ENCODE measurements at regions of chr2 and their contacts with region 1.

Region 1: GRCh38 chr2:157302492-157303099 is 23.0 kb downstream of the ERMN start:
- DNase-seq: no peak
- H3K4me3 ChIP-seq: no peak overlapping the region
- H3K27ac ChIP-seq: no peak overlapping the region
- H3K4me1 ChIP-seq: peaks cover 0 to 2% (median 0%) of the 10 kb centered on the region in 4 experiments; a peak in 1 of 7 replicates
- H3K27me3 ChIP-seq: no peaks in the 10 kb centered on the region
- CTCF ChIP-seq: peak in 2 of 3 experiments; percentile 53 to 72; a peak in 3 of 4 replicates
- EP300 ChIP-seq: no peak
- POLR2A ChIP-seq: no peak
- RAD21 ChIP-seq: peak; percentile 86 to 90

Region 2: GRCh38 chr2:157287160-157287559 is 15.4 kb before region 1 on chr2:
- CTCF ChIA-PET with region 1: interaction called, 20 read pairs
- POLR2A ChIA-PET with region 1: no interaction called
- DNase-seq: no peak
- H3K4me3 ChIP-seq: no peak overlapping the region
- H3K27ac ChIP-seq: no peak overlapping the region
- H3K4me1 ChIP-seq: no peaks in the 10 kb centered on the region
- H3K27me3 ChIP-seq: no peaks in the 10 kb centered on the region
- CTCF ChIP-seq: no peak
- EP300 ChIP-seq: no peak
- POLR2A ChIP-seq: no peak
- RAD21 ChIP-seq: no peak

Region 3: DNA sequence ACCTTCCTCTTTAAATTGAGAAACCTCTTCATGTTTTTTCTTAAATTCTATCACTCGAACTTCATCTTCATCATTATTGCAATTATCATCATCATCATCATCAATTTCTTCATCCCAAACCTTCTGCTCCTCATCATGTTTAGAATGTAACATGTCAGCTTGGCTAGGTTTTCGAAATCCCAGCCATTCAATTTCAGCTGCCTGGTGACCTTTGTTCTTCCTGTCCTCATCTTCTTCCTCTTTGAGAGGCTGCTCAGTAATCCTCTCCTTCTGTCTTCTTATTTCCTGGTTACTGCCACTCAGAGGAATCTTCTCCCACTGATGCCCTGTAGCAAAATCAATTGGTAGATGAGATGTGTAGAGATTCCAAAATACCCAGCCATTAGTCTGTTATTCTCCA is 18.9 kb after region 1 on chr2:
- CTCF ChIA-PET with region 1: interaction called, 299 read pairs
- POLR2A ChIA-PET with region 1: no interaction called
- DNase-seq: no peak
- H3K4me3 ChIP-seq: no peak overlapping the region
- H3K27ac ChIP-seq: no peak overlapping the region
- H3K4me1 ChIP-seq: peaks cover 0 to 8% (median 5%) of the 10 kb centered on the region in 4 experiments; a peak in 6 of 7 replicates
- H3K27me3 ChIP-seq: no peaks in the 10 kb centered on the region
- CTCF ChIP-seq: no peak
- EP300 ChIP-seq: no peak
- POLR2A ChIP-seq: no peak
- RAD21 ChIP-seq: no peak

Region 4: DNA sequence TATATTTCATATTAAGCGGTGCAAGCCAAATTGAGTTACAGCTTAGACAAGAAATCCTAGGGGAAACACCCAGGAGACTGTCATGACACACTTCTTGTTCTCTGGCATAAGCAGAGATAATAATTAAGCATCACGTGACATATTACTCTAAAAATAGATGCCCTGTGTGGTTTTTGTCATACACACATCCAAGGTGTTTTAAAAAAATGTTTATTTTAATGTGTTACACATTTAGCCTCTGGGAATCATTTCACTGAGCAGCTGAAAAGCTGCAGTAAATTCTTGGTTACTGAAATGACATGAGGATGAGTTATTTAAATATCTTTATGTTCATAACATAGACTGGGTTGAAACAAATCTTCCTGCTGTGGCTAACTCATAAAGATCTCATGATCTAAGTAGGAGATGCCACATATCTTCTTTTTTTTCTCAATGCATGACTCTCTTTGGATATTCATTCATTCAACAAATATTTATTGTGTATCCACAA is 61.1 kb after region 1 on chr2:
- CTCF ChIA-PET with region 1: interaction called, 12 read pairs
- POLR2A ChIA-PET with region 1: no interaction called
- DNase-seq: no peak
- H3K4me3 ChIP-seq: no peak overlapping the region
- H3K27ac ChIP-seq: no peak overlapping the region
- H3K4me1 ChIP-seq: no peaks in the 10 kb centered on the region
- H3K27me3 ChIP-seq: no peaks in the 10 kb centered on the region
- CTCF ChIP-seq: no peak
- EP300 ChIP-seq: no peak
- POLR2A ChIP-seq: no peak
- RAD21 ChIP-seq: no peak

Region 5: DNA sequence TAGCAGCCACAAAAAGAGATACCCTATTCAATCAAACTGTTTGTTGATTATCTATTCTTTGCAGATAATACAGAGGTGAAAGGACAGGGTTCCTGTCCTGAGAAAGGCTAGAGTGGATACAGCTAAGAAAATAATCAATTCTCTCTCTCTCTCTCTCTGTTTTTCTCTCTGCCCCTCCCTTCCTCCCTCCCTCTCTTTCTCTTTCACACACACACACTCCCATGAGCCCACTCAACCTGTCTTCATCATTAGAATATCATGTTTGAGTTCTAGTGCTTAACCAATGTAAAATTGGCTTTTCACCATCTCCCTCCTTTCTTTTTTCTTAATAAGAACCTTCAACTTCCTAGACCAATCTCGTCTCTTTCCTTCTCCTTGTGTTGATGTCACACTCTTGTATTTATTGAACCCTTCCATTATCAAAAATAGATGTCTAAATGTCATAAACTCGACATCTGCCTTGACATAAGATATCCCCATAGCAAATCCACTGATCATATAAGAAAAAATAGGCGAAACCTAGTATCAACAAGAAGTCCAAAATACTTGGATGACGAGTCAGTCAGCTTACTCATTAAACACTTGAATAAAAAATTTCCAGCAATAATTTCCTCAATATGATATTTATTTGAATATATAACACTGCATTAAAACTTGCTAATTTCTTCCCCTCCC is 184.1 kb after region 1 on chr2:
- CTCF ChIA-PET with region 1: interaction called, 20 read pairs
- POLR2A ChIA-PET with region 1: no interaction called
- DNase-seq: no peak
- H3K4me3 ChIP-seq: no peak overlapping the region
- H3K27ac ChIP-seq: no peak overlapping the region
- H3K4me1 ChIP-seq: no peaks in the 10 kb centered on the region
- H3K27me3 ChIP-seq: no peaks in the 10 kb centered on the region
- CTCF ChIP-seq: no peak
- EP300 ChIP-seq: no peak
- POLR2A ChIP-seq: no peak
- RAD21 ChIP-seq: no peak

Measured in H1 (cell line).